ENCODE measurements at regions of chr11 and their contacts with region 1.

Region 1: DNA sequence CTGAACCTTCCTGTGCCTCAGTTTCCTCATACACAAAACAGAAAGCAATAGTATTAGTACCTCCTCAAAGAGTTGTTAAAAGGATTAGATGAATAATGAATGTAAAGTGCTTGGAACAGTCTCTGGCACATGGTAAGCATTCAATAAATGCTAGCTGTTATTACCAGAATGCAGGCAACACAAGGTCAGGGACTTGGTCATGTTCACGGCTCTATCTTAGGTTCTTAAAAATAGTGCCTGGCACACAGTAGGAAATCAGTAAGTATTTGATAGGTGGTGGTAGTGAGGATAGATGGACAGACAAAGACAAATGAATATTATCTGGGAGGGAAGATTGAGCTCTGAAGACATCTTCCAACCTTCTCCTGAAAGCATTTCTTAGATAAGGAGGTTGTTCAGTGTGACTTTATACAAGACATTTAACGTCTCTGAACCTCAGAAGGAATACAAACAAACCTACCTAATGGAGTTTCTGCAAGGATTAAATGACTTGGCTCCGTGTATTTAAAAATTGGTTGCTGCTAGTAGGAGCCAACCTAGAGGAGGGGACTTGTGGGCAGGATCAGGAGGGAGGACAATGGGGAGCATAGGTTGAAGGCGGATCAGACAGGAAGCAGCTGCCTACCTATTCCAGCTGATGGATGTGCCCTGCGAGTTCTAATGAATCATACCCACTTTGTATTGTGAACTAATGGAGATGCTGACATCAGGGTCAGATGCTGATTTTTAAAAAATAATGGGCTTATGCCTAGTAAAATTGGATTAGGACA is 94.1 kb downstream of the DBX1 start:
- DNase-seq: no peak
- H3K4me3 ChIP-seq: no peak overlapping the region
- H3K27ac ChIP-seq: no peak overlapping the region
- H3K4me1 ChIP-seq: peaks cover 0 to 16% (median 14%) of the 10 kb centered on the region in 4 experiments; a peak in 6 of 7 replicates
- H3K27me3 ChIP-seq: no peaks in the 10 kb centered on the region
- CTCF ChIP-seq: no peak
- EP300 ChIP-seq: no peak
- POLR2A ChIP-seq: no peak
- RAD21 ChIP-seq: no peak

Region 2: DNA sequence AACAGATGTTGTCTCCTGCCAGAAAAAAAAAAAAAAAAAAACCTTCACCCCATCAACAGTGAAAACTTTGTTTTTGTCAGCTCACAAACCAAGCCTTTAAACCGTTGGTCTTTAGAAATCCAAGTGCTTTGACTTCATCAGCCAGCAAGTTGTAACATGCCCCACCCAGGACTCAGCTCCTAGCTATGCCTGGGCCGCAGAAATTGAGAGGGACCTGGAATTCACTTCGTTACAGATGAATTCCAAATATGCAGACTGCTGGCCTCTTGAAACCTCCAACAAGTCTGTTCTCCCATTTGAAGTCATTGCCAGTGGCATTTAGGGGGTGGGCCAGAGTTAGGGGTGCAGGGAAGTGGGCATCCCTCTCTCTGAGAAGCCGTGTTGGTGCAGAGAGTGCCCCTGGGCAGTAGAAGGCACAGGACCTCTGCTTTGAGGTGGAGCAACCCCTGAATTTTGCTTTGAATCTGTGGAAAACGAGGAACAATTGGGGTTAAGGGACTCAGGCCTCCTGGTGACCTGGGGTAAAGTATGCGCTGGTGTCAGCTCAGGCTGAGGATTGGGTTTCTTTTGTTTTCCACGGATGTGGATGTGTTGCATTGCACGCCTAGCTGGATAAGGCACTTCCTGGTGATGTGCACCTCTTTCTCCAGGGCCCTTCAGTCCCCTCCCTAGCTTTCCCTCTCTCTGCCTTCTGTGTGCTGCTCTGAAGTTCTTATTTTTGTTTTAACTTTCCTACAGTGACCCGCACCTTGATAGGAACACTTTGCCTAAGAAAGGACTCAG is 15.5 kb before region 1 on chr11:
- CTCF ChIA-PET with region 1: interaction called, 11 read pairs
- POLR2A ChIA-PET with region 1: interaction called, 16 read pairs
- DNase-seq: no peak
- H3K4me3 ChIP-seq: peak overlapping the region in 3 of 4 experiments; percentile 4 to 26 (median 11); a peak in 3 of 8 replicates
- H3K27ac ChIP-seq: no peak overlapping the region
- H3K4me1 ChIP-seq: peaks cover 13 to 24% (median 18%) of the 10 kb centered on the region in 4 experiments
- H3K27me3 ChIP-seq: no peaks in the 10 kb centered on the region
- CTCF ChIP-seq: no peak
- EP300 ChIP-seq: no peak
- POLR2A ChIP-seq: no peak
- RAD21 ChIP-seq: 0 out of 4 replicates have a peak, but pooled peaks of 1 of the 2 experiments have one; percentile 4

Measured in H1 (cell line).